Activated CD8-positive, alpha-beta T cell treated with anti-CD3 and anti-CD28 coated beads for 36 hours (primary cell): ENCODE measurements at regions of chr19 and their contacts with region 1.

Region 1: GRCh38 chr19:6125571-6125989 is 9.9 kb upstream of the ACSBG2 start:
- DNase-seq: peak; percentile 76
- ATAC-seq: peak; percentile 95
- H3K4me3 Mint-ChIP-seq: no peak overlapping the region
- H3K27ac Mint-ChIP-seq: no peak overlapping the region
- H3K4me1 Mint-ChIP-seq: no peaks in the 10 kb centered on the region
- H3K27me3 Mint-ChIP-seq: no peaks in the 10 kb centered on the region
- CTCF ChIP-seq: peak; percentile 87

Region 2: DNA sequence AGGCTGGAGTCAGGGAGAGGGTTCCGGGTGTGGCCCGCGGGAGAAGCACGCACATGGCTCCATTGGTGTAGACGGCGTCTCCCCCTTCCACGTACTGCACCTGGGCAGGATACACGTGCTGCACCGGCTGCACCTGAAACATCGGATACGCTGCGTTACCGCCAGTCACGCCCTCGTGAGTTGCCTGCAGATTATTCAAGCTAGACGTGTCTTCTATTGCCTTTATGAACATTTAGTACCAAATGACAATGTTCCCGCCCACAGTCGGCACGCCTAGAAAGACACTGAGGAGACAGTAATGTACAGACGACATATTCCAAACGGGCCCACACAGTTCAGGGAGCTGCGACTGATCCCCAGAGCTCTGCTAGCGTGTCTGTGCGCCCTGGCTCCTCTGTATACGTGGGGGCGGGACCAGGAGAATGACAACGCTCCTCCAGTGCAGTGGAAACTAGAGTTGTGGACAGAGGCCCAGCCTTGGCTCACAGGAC is 83.5 kb before region 1 on chr19:
- CTCF ChIA-PET with region 1: interaction called, 218 read pairs
- POLR2A ChIA-PET with region 1: no interaction called
- intact Hi-C with region 1: no loop called
- DNase-seq: no peak
- ATAC-seq: no peak
- H3K4me3 Mint-ChIP-seq: no peak overlapping the region
- H3K27ac Mint-ChIP-seq: no peak overlapping the region
- H3K4me1 Mint-ChIP-seq: peaks cover 19% of the 10 kb centered on the region
- H3K27me3 Mint-ChIP-seq: no peaks in the 10 kb centered on the region
- CTCF ChIP-seq: no peak

Region 3: GRCh38 chr19:6110360-6110977 is 15.1 kb before region 1 on chr19 and contains the start of gene RFX2:
- CTCF ChIA-PET with region 1: interaction called, 45 read pairs
- POLR2A ChIA-PET with region 1: no interaction called
- intact Hi-C with region 1: no loop called
- DNase-seq: peak; percentile 99
- ATAC-seq: peak; percentile 98
- H3K4me3 Mint-ChIP-seq: peak within 1 kb of the TSS; percentile 83
- H3K27ac Mint-ChIP-seq: peak within 1 kb of the TSS; percentile 79
- H3K4me1 Mint-ChIP-seq: peaks cover 22% of the 10 kb centered on the region
- H3K27me3 Mint-ChIP-seq: peaks cover 3% of the 10 kb centered on the region
- CTCF ChIP-seq: no peak
- total RNA-seq, gene RFX2: 8.9 to 10.5 TPM

Region 4: DNA sequence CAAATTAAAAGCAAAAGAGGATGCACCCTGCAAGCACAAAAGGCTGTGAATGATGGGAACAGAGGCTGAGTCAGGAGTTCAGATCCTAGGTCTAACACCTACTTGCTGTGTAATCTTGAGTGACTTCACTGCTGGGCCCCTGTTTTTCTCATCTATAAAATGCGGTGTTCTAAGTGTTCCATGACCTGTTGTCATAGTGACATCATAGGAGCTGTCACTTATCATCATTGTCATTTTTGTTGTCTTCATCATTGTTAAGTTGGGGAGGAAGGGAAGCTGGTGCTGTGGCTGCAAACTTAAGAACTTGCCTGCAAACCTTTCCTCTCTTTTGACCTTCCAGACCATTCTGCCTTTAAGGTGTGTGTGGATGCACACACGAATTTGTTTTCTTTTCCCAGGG is 30.5 kb after region 1 on chr19:
- CTCF ChIA-PET with region 1: interaction called, 12 read pairs
- POLR2A ChIA-PET with region 1: no interaction called
- intact Hi-C with region 1: no loop called
- DNase-seq: no peak
- ATAC-seq: no peak
- H3K4me3 Mint-ChIP-seq: no peak overlapping the region
- H3K27ac Mint-ChIP-seq: no peak overlapping the region
- H3K4me1 Mint-ChIP-seq: peaks cover 4% of the 10 kb centered on the region
- H3K27me3 Mint-ChIP-seq: no peaks in the 10 kb centered on the region
- CTCF ChIP-seq: no peak